OCI-LY7 (cell line): ENCODE measurements at regions of chr7 and their contacts with region 1.

Region 1: DNA sequence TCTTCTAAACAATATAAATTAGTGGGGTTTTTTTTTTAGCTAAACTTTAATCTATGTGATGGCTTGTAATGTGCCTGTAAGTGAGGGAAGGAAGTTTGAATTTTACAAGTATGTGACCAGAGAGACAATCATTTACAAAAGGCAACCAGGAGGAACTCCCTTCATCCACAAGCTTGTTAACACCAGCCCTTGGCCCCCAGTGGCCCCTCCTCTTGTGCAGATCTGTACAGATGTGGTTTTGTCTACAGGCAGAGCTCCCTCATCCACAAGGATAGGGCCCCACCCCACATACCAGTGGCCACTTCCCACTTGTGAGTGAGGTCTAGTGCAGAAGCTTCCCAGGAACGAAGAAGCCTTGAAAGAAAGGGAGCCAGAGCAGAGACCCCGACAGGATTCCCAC is 234.1 kb upstream of the KMT2E start:
- DNase-seq: no peak
- H3K4me3 ChIP-seq: no peak overlapping the region
- H3K27ac ChIP-seq: no peak overlapping the region
- H3K4me1 ChIP-seq: no peaks in the 10 kb centered on the region
- CTCF ChIP-seq: no peak

Region 2: GRCh38 chr7:104723001-104723400 is 56.9 kb before region 1 on chr7:
- CTCF ChIA-PET with region 1: no interaction called
- POLR2A ChIA-PET with region 1: no interaction called
- intact Hi-C with region 1: loop called (anchors 10 kb)
- DNase-seq: no peak
- H3K4me3 ChIP-seq: no peak overlapping the region
- H3K27ac ChIP-seq: no peak overlapping the region
- H3K4me1 ChIP-seq: no peaks in the 10 kb centered on the region
- CTCF ChIP-seq: no peak

Region 3: GRCh38 chr7:105024743-105025142 is 244.9 kb after region 1 on chr7:
- CTCF ChIA-PET with region 1: no interaction called
- POLR2A ChIA-PET with region 1: no interaction called
- intact Hi-C with region 1: no loop called
- DNase-seq: no peak
- H3K4me3 ChIP-seq: no peak overlapping the region
- H3K27ac ChIP-seq: no peak overlapping the region
- H3K4me1 ChIP-seq: peaks cover 84% of the 10 kb centered on the region
- CTCF ChIP-seq: no peak

Region 4: DNA sequence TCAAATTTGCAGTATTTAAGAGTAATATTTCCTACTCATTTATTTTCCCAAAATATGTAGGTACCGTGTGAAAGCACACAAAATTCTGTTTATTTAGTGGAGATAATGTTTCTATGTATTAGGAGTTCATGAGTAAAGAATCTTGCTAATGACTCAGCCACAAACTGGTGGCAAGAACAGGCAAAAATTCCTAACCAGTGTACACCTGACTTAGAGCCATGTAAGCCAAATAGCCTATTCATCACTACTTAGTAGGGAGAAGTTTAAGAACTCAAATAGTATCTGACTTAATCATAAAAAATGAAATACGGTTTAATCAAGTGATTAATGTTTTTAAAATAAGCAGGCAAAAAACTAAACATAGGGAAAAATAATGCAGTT is 439.9 kb after region 1 on chr7:
- CTCF ChIA-PET with region 1: no interaction called
- POLR2A ChIA-PET with region 1: no interaction called
- intact Hi-C with region 1: no loop called
- DNase-seq: no peak
- H3K4me3 ChIP-seq: no peak overlapping the region
- H3K27ac ChIP-seq: no peak overlapping the region
- H3K4me1 ChIP-seq: no peaks in the 10 kb centered on the region
- CTCF ChIP-seq: no peak